ENCODE measurements at regions of chr12 and their contacts with region 1.

Region 1: DNA sequence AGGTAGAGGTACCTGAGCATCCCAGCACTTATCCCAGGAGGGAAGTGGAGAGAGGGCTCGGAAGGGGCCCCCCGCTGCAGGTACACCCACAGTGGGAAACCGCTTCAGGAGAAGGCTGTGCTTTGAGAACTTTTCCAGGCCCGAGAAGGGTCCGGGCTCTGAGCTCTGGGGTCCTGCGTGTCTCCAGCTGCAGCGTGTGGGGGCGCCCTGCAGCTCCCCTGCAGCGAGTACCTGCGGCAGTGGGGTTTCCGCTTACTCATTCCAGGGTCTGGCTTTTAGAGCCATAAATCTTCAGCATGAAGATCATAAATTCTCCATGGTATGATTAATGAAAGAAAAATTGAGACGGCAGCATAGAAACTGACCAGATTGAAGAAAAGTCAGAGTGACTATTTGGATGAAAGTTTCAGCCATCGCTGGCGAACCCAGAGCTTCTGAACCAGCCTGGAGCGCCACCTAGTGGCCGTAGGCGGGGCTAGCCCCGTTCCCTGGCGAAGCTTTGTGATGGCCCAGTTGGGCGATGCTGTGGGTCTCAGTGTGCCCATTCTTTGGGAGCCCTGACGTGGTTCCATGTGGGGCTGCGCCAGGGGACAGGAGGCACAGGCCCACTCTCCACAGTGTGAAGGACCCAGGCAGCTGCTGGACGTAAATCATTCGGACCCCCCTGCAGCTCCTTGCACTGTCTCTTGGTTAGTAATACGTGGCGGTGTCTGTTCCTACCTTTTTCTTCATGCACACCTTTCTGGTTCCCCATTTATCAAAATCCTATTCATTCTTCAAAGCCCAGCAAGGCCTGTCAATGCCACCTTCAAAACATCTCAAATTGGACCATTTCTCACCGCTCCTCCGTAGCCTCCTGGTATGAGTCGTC is 198.2 kb downstream of the TSPAN9 start:
- DNase-seq: peak; percentile 76
- H3K4me3 ChIP-seq: peak overlapping the region; percentile 15
- H3K27ac ChIP-seq: no peak overlapping the region
- H3K4me1 ChIP-seq: no peaks in the 10 kb centered on the region
- CTCF ChIP-seq: peak; percentile 95

Region 2: GRCh38 chr12:3073438-3074250 is 201.8 kb before region 1 on chr12:
- CTCF ChIA-PET with region 1: interaction called, 4 read pairs
- POLR2A ChIA-PET with region 1: no interaction called
- intact Hi-C with region 1: loop called (anchors 1 kb)
- DNase-seq: peak; percentile 78
- H3K4me3 ChIP-seq: no peak overlapping the region
- H3K27ac ChIP-seq: no peak overlapping the region
- H3K4me1 ChIP-seq: no peaks in the 10 kb centered on the region
- CTCF ChIP-seq: peak; percentile 99

Region 3: DNA sequence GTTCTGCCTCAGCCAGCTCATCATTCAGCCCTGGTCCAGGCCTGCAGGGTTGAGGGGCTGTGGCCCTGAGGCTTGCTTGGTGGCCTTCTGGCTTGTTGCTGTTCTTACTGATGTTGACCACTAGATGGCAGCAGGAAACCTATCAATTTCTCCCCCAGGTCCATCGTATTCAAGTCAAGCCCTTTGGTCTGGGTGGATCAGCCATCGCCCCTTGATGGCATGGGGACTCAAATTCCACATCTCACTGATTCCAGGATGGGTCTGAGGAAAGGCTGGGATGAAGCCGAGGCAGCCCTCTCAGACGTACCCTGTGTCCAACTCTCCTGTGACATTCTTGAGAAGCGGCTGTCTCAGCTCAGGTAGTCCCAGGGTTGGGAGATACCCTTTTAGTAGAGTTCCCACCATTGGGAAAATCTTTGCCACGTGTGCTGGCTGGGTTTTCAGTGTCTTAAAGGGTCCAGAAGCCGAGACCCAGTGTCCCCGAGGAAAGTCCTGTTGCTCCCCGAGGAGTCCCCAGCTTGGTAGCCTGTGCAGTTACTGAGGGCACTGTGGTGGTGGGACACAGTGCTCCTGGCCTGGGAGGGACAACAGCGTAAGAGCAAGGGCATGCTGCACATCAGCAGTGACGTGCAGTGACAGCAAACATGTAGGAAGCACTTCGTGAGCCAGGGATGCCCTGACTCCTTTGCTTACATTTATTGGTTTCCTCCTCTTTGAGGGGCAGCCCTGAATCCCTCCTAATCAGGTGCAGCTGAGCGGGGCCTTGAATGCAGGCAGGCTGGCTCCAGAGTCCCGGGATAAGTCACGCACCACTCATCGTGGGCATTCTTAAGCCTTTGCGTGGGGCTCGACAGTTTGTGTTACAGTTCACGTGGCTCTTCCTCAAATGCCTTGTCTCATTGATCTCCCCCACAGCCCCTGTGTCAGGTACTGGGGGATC is 139.6 kb before region 1 on chr12:
- CTCF ChIA-PET with region 1: interaction called, 6 read pairs
- POLR2A ChIA-PET with region 1: interaction called, 3 read pairs
- intact Hi-C with region 1: loop called (anchors 1 kb)
- DNase-seq: peak; percentile 70
- H3K4me3 ChIP-seq: no peak overlapping the region
- H3K27ac ChIP-seq: no peak overlapping the region
- H3K4me1 ChIP-seq: no peaks in the 10 kb centered on the region
- CTCF ChIP-seq: peak; percentile 85

Measured in OCI-LY7 (cell line).